Activated CD8-positive, alpha-beta T cell treated with anti-CD3 and anti-CD28 coated beads, Interleukin-2, amount 10 ng/mL, durations not matched to agents 7 days and 5 days (primary cell): ENCODE measurements at regions of chr18 and their contacts with region 1.

Region 1: GRCh38 chr18:63320046-63320689 is 599 bp upstream of the BCL2 start:
- DNase-seq: peak; percentile 93
- ATAC-seq: peak; percentile 81
- H3K4me3 Mint-ChIP-seq: peak overlapping the region; percentile 94
- H3K27ac Mint-ChIP-seq: peak overlapping the region; percentile 91
- H3K4me1 Mint-ChIP-seq: peaks cover 27% of the 10 kb centered on the region
- H3K27me3 Mint-ChIP-seq: no peaks in the 10 kb centered on the region

Region 2: GRCh38 chr18:63119647-63120046 is 200.5 kb before region 1 on chr18:
- CTCF ChIA-PET with region 1: interaction called, 19 read pairs
- POLR2A ChIA-PET with region 1: interaction called, 4 read pairs
- DNase-seq: no peak
- ATAC-seq: peak; percentile 59
- H3K4me3 Mint-ChIP-seq: no peak overlapping the region
- H3K27ac Mint-ChIP-seq: peak overlapping the region; percentile 27
- H3K4me1 Mint-ChIP-seq: peaks cover 7% of the 10 kb centered on the region
- H3K27me3 Mint-ChIP-seq: peaks cover 30% of the 10 kb centered on the region

Region 3: DNA sequence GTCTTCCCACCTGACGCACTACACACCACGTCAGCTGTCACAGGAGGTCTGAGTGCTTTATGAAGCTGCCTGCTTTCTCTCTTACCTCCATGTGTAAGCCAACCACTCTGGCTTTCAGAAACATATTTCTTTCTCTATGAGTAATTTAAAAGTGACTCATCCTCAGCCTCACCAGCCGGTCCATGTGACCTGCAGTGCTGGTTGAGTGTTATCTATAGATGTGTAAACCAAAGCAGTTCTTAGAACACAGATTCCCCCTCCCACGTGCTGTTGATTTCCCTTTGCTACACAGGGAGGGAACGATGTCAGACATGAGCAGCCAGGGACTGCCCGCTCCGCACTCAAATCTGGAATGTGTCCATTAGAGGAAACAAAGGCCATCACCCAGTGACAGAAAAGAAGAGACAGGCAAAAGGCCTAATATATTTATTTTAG is 158.4 kb before region 1 on chr18:
- CTCF ChIA-PET with region 1: interaction called, 57 read pairs
- POLR2A ChIA-PET with region 1: interaction called, 152 read pairs
- DNase-seq: peak; percentile 90
- ATAC-seq: peak; percentile 92
- H3K4me3 Mint-ChIP-seq: peak overlapping the region; percentile 78
- H3K27ac Mint-ChIP-seq: peak overlapping the region; percentile 93
- H3K4me1 Mint-ChIP-seq: peaks cover 93% of the 10 kb centered on the region
- H3K27me3 Mint-ChIP-seq: no peaks in the 10 kb centered on the region

Region 4: GRCh38 chr18:63224630-63225029 is 95.5 kb before region 1 on chr18:
- CTCF ChIA-PET with region 1: interaction called, 18 read pairs
- POLR2A ChIA-PET with region 1: interaction called, 12 read pairs
- DNase-seq: no peak
- ATAC-seq: peak; percentile 67
- H3K4me3 Mint-ChIP-seq: peak overlapping the region; percentile 4
- H3K27ac Mint-ChIP-seq: peak overlapping the region; percentile 55
- H3K4me1 Mint-ChIP-seq: peaks cover 77% of the 10 kb centered on the region
- H3K27me3 Mint-ChIP-seq: no peaks in the 10 kb centered on the region

Region 5: GRCh38 chr18:63292831-63293683 is 27.1 kb before region 1 on chr18:
- CTCF ChIA-PET with region 1: interaction called, 18 read pairs
- POLR2A ChIA-PET with region 1: interaction called, 24 read pairs
- DNase-seq: peak; percentile 59
- ATAC-seq: peak; percentile 51
- H3K4me3 Mint-ChIP-seq: peak overlapping the region; percentile 34
- H3K27ac Mint-ChIP-seq: peak overlapping the region; percentile 72
- H3K4me1 Mint-ChIP-seq: peaks cover 70% of the 10 kb centered on the region
- H3K27me3 Mint-ChIP-seq: no peaks in the 10 kb centered on the region

Region 6: DNA sequence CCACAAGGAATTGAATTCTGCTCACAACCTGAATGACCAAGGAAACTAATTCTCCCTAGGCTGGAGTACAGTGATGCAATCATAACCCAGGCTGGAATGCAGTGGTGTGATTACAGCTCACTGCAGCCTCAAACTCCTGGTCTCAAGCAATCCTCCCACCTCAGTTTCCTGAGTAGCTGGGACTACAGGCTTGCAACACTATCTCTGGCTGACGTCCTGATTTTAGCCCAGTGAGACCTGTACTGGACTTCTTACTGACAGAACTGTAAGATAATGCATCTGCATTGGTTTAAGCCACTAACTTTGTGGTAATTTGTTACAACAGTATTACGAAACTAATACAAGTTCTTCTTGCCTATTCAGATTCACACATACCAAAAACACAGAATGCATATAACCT is 56.4 kb after region 1 on chr18:
- CTCF ChIA-PET with region 1: no interaction called
- POLR2A ChIA-PET with region 1: no interaction called
- DNase-seq: no peak
- ATAC-seq: no peak
- H3K4me3 Mint-ChIP-seq: no peak overlapping the region
- H3K27ac Mint-ChIP-seq: no peak overlapping the region
- H3K4me1 Mint-ChIP-seq: peaks cover 35% of the 10 kb centered on the region
- H3K27me3 Mint-ChIP-seq: no peaks in the 10 kb centered on the region

Region 7: GRCh38 chr18:63387861-63388260 is 67.7 kb after region 1 on chr18:
- CTCF ChIA-PET with region 1: no interaction called
- POLR2A ChIA-PET with region 1: no interaction called
- DNase-seq: no peak
- ATAC-seq: no peak
- H3K4me3 Mint-ChIP-seq: no peak overlapping the region
- H3K27ac Mint-ChIP-seq: no peak overlapping the region
- H3K4me1 Mint-ChIP-seq: no peaks in the 10 kb centered on the region
- H3K27me3 Mint-ChIP-seq: no peaks in the 10 kb centered on the region